ENCODE measurements at regions of chr1 and their contacts with region 1.

Region 1: DNA sequence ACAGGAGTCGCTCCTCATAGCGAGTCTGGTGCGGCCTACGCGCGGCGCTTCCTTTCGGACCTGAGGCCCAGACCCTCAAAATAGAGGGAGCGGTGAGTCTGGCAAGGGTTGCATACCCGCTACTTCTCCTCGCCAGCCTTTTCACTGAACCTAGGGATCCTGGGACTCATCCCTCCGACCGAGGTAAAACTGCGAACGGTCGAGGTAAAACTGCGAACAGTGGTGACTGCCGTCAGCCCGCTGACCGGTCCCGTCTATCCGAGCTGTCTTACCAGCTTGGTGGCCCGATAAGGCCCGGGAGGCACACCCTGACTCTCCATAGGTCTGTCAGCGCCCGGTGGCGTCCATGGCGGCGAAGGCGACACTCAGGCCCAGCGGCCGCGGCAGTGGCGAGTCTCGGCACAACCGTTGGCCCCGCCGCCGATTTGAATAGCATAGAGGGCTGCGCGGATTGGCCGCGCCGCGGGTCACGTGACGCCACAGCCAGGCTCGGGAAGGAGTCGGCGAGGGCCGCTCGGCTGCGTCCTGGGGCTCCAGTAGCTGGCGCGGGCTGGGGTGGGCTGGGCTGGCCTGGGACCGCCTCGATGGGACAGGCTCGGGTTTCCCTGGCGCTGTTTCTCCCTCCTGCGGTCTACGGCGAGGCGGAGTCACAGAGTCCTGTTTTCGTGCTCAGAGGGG is at the start of gene DEPDC1:
- DNase-seq: peak; percentile 90
- H3K4me3 ChIP-seq: peak within 1 kb of the TSS; percentile 94
- H3K27ac ChIP-seq: peak within 1 kb of the TSS; percentile 63
- H3K4me1 ChIP-seq: peaks cover 33% of the 10 kb centered on the region
- CTCF ChIP-seq: no peak
- total RNA-seq, gene DEPDC1: 20.6 and 20.8 TPM in 2 replicates

Region 2: GRCh38 chr1:68479501-68479900 is 17.3 kb before region 1 on chr1:
- CTCF ChIA-PET with region 1: interaction called, 3 read pairs
- POLR2A ChIA-PET with region 1: interaction called, 24 read pairs
- intact Hi-C with region 1: no loop called
- DNase-seq: no peak
- H3K4me3 ChIP-seq: no peak overlapping the region
- H3K27ac ChIP-seq: no peak overlapping the region
- H3K4me1 ChIP-seq: no peaks in the 10 kb centered on the region
- CTCF ChIP-seq: no peak

Region 3: GRCh38 chr1:68485431-68486022 is 11.3 kb before region 1 on chr1:
- CTCF ChIA-PET with region 1: interaction called, 3 read pairs
- POLR2A ChIA-PET with region 1: interaction called, 24 read pairs
- intact Hi-C with region 1: no loop called
- DNase-seq: no peak
- H3K4me3 ChIP-seq: no peak overlapping the region
- H3K27ac ChIP-seq: no peak overlapping the region
- H3K4me1 ChIP-seq: no peaks in the 10 kb centered on the region
- CTCF ChIP-seq: 0 out of 2 replicates have a peak, but pooled peaks have one; percentile 22

Region 4: DNA sequence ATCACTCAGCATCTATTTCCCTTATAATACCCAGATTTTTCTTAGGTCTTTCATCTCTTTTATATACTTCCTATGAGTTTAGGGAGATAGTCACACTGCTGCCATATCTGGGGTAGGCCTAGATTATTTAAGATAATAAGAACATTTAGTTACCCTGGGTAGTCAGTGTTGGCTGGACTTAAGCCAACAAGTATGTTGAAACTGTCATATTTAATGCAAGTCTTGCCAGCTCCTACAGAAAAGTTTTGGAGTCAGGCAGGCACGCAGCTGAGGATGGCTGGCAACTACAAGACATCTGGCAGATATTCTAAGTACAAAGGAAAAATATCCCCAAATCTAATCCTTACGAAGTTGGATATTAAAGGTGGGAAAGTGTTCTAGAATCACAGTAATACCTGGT is 19.2 kb after region 1 on chr1:
- CTCF ChIA-PET with region 1: no interaction called
- POLR2A ChIA-PET with region 1: interaction called, 8 read pairs
- intact Hi-C with region 1: loop called (anchors 2 kb)
- DNase-seq: no peak
- H3K4me3 ChIP-seq: no peak overlapping the region
- H3K27ac ChIP-seq: no peak overlapping the region
- H3K4me1 ChIP-seq: peaks cover 20% of the 10 kb centered on the region
- CTCF ChIP-seq: no peak

Region 5: GRCh38 chr1:68521286-68521685 is 24.5 kb after region 1 on chr1:
- CTCF ChIA-PET with region 1: interaction called, 16 read pairs
- POLR2A ChIA-PET with region 1: interaction called, 8 read pairs
- intact Hi-C with region 1: loop called (anchors 2 kb)
- DNase-seq: no peak
- H3K4me3 ChIP-seq: no peak overlapping the region
- H3K27ac ChIP-seq: no peak overlapping the region
- H3K4me1 ChIP-seq: peaks cover 20% of the 10 kb centered on the region
- CTCF ChIP-seq: no peak